SK-N-SH (cell line): ENCODE measurements at regions of chr12 and their contacts with region 1.

Region 1: DNA sequence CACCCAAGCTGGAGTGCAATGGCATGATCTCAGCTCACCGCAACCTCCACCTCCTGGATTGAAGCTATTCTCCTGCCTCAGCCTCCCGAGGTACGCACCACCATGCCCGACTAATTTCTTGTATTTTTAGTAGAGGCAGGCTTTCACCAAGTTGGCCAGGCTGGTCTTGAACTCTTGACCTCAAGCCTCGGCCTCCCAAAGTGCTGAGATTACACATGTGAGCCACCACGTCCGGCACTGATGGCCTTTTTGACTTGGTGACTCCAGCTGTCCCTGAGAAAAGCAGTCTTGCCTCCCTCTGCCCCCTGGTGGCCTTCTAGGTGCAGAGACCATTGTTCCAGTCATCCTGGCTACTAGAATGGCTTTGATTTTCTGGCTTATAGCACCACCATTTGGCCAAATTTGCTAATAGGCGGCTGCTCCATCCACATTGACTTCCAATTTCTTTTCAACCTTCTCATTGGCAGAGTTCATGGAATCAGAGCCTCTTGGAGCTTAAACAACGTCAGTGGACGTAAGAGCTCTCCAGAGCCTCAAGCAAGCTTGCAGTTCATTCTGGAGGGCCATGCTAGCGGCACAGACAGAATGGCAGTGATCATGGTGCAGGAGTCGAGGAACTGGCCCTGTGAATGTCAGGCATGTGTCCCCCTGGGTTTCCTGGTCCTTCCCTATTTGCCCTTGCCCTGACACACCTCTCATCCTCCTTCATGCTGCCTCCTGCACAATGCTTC is 25.4 kb upstream of the EIF4B start:
- DNase-seq: peak; percentile 83
- H3K4me3 ChIP-seq: peak overlapping the region in 1 of 2 experiments; percentile 6; a peak in 1 of 4 replicates
- H3K27ac ChIP-seq: no peak overlapping the region
- H3K4me1 ChIP-seq: peaks cover 0 to 12% of the 10 kb centered on the region in 2 experiments; a peak in 2 of 4 replicates
- H3K27me3 ChIP-seq: no peaks in the 10 kb centered on the region
- CTCF ChIP-seq: peak; percentile 100
- EP300 ChIP-seq: no peak
- RAD21 ChIP-seq: peak; percentile 99

Region 2: DNA sequence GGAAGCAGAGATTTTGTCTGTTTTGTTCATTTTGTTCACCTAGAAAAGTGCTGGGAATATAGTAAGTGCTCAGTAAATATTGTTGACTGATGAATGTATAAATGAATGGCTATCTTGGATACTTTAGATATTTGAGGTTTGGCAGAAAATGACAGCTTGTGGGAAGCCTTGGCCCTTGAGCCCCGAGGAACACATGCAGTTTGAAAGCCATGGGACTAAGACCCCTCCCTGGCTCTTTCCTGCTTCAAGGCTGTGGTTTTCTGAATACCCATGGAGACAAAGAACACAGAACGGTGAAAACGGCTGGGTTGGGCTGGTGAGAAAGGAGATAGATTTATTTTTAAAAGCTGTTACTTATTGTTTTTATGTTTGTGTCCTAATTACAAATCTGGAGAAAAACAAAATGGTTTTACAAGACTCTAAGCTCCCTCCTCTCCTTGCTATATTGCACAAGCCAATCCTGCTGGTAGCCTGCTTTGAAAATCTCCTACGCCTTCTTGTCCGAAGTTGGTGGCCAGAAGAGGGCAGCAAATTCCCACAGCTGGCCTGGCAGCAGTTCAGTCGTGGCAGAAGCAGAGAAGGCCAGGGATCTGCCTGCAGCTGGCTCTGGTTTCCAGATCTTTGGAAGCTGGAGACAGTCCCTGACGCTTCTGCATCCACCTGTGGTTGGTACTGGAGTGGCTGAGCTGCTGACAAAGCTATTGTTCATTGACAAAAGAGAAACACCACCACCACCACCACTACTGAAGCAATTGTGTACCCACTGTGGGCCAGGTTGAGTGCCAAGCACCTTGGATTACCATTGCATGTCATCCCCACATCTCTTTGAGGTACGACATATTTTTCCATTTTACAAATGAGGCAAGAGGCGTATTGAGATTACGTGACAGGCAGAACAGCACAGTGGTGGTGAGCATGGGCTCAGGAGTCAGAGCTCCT is 608.4 kb before region 1 on chr12:
- CTCF ChIA-PET with region 1: interaction called, 24 read pairs
- POLR2A ChIA-PET with region 1: no interaction called
- DNase-seq: peak; percentile 87
- H3K4me3 ChIP-seq: peak overlapping the region in 1 of 2 experiments; percentile 43; a peak in 1 of 4 replicates
- H3K27ac ChIP-seq: no peak overlapping the region
- H3K4me1 ChIP-seq: no peaks in the 10 kb centered on the region
- H3K27me3 ChIP-seq: peaks cover 48% of the 10 kb centered on the region
- CTCF ChIP-seq: peak; percentile 81
- EP300 ChIP-seq: no peak
- RAD21 ChIP-seq: peak; percentile 94

Region 3: DNA sequence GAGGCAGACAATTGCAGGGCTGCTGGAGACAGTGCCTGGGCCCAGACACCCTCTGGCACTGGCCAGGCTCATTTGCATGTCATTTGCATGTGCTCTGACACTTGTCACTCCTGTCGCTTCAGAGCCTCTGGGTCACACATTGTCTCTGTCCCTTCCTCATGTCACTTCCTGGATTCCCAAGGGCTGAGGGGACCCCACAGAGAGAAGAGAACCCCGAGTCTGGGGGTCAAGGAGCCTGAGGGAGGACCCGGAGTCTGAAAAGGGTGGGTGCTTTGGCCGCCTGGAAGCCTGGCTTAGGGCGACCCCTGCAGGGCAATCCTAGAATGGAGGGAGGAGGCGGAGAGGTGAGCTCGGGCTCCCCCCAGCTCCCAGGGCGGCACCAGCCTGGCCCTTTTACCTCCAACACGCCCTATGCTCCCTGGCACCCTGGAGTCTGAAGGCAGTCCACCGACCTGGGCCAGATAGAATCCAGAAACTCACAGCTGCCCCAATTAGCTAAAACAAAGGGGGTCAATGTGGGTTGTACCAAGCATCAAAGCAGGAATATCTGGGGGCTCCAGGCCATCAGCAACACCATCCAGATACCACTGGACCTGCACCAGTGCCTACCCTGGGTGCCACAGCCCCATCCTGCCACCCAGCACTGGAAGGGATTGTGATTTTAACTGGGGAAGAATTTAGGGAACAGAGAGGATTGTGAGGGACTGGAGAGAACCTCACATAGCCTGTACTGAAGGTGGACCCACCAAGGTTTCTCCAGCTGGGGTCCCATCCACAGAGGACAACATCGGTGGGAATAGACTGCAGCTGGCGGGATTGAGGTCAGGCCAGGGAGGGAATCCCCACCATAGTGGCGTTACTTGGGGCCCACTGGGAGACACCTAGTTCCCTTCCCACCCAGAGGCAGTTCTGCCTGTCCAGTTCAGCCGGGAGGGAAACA is 110.2 kb before region 1 on chr12:
- CTCF ChIA-PET with region 1: interaction called, 27 read pairs
- POLR2A ChIA-PET with region 1: no interaction called
- DNase-seq: peak; percentile 84
- H3K4me3 ChIP-seq: no peak overlapping the region; a peak in 1 of 4 replicates
- H3K27ac ChIP-seq: peak overlapping the region in 1 of 2 experiments; percentile 69; a peak in 2 of 4 replicates
- H3K4me1 ChIP-seq: peaks cover 10 to 18% of the 10 kb centered on the region in 2 experiments; a peak in 3 of 4 replicates
- H3K27me3 ChIP-seq: no peaks in the 10 kb centered on the region
- CTCF ChIP-seq: peak; percentile 85
- EP300 ChIP-seq: no peak
- RAD21 ChIP-seq: peak; percentile 71

Region 4: DNA sequence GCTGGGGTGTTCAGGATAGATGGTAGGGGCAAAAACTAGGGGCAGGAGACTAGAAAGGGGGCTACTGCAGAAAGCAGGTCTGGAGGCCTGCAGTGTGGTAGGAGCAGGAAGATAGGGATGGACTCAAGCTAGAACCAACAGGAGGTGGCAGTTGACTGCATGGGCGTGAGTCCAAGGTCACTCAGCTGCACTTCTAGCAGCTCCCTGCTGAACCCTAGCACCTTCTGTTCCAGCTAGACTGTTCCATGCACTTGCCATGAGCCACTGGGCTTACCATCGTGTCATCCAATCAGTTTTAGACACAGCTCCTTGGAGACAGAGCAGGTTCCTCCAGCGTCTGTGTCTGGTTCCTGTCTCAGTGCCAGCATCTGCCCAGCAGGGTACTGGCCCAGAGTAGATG is 64.6 kb before region 1 on chr12:
- CTCF ChIA-PET with region 1: interaction called, 13 read pairs
- POLR2A ChIA-PET with region 1: no interaction called
- DNase-seq: no peak
- H3K4me3 ChIP-seq: no peak overlapping the region
- H3K27ac ChIP-seq: no peak overlapping the region
- H3K4me1 ChIP-seq: no peaks in the 10 kb centered on the region
- H3K27me3 ChIP-seq: no peaks in the 10 kb centered on the region
- CTCF ChIP-seq: no peak
- EP300 ChIP-seq: no peak
- RAD21 ChIP-seq: no peak

Region 5: DNA sequence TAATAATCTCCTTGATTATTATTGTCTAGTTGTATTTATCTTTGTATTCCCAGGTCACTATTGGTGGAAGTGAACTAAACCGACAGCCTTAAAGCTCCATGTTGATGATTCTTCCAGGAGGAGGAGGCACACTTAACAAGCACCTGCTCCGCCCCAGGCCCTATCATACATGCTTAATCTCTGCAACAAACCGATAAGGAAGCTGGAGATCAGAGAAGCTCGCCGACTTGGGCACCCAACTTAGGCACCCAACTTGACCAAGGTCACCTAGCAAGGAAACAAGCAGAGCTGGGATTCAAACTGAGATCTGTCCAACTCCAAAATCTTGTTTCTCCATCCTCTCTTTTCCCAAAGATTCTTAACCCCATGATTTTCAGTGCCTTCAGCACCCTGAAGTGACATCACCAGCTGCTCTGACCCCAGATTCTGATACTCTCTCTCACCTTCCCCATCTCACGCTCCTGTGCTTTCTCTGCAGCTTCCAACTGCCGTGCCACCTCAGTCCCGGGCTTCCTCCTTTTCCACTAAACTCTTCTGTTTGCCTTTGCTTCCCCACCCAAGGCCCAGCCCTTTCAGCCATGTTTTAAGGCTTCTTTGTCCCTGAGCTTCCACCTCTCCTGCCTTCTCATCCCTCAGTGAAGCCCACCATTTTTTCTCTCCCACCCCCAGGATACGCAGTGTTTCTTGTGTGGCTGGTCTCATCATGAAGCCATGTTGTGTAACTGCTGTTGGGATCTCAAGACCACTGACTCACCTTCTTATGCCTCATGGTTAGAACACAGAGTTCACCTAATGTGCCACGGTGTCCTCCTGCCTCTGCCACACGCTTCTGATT is 38.6 kb before region 1 on chr12:
- CTCF ChIA-PET with region 1: interaction called, 31 read pairs
- POLR2A ChIA-PET with region 1: no interaction called
- DNase-seq: no peak
- H3K4me3 ChIP-seq: no peak overlapping the region
- H3K27ac ChIP-seq: no peak overlapping the region
- H3K4me1 ChIP-seq: peaks cover 0 to 34% of the 10 kb centered on the region in 2 experiments; a peak in 2 of 4 replicates
- H3K27me3 ChIP-seq: no peaks in the 10 kb centered on the region
- CTCF ChIP-seq: no peak
- EP300 ChIP-seq: no peak
- RAD21 ChIP-seq: no peak

Region 6: DNA sequence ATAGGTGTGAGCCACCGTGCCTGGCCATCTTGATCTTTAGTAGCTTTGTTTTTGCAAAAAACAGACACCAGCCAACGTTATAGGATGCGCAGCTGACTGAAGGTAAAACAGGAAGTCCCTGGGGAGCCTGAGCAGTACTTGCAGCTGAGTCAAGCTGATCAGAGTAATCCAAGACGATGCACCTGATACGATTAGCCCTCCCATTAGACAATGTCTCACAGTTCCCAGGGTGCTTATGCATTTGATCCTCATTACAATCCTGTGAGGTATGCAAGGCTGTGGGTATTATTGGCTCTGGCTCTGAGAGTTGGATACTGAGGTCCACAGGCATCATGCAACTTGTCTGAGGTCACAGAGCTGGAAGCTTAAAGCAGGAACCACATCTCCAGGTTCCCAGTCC is 23.9 kb before region 1 on chr12:
- CTCF ChIA-PET with region 1: interaction called, 31 read pairs
- POLR2A ChIA-PET with region 1: no interaction called
- DNase-seq: no peak
- H3K4me3 ChIP-seq: no peak overlapping the region
- H3K27ac ChIP-seq: no peak overlapping the region
- H3K4me1 ChIP-seq: no peaks in the 10 kb centered on the region
- H3K27me3 ChIP-seq: no peaks in the 10 kb centered on the region
- CTCF ChIP-seq: no peak
- EP300 ChIP-seq: no peak
- RAD21 ChIP-seq: no peak

Region 7: GRCh38 chr12:52992699-52993557 is 12.1 kb after region 1 on chr12:
- CTCF ChIA-PET with region 1: interaction called, 45 read pairs
- POLR2A ChIA-PET with region 1: no interaction called
- DNase-seq: no peak
- H3K4me3 ChIP-seq: no peak overlapping the region
- H3K27ac ChIP-seq: no peak overlapping the region
- H3K4me1 ChIP-seq: no peaks in the 10 kb centered on the region
- H3K27me3 ChIP-seq: no peaks in the 10 kb centered on the region
- CTCF ChIP-seq: no peak
- EP300 ChIP-seq: no peak
- RAD21 ChIP-seq: no peak